ENCODE measurements at regions of chr12 and their contacts with region 1.

Region 1: DNA sequence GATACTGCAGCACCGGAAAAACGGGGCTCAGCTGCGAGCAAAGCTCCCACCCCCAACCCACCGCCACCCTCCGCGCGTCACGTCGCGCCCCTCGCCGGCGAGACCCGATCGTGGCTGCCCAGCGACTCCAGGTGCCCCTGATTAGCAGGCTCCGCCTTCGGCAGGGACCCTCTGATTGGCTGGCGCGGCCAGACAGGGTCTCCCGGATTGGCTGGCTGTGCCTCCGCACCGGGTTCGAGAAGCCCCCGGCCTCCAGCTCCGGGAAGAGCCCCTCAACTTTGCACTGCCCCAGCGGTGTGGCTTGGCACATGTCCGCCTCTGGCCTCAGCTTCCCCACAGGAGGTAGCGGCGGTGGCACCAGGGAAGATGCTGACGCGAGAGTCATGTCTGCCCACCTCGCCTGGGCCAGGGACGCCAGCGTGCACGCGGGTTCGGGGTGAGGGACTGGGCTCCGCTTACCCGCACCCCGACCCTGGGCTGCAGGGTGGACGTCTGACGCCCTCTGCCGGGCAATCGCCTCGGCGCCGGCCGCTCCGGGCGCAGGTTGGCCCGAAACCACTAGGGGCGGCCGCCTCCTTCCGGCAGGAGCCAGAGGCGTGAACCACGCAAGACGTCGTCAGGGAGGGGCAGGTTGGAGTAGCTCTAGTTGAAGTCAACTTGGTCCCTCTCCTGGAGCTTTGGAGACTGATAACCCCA is 498 bp upstream of the RHOF start:
- DNase-seq: peak; percentile 88 to 96
- ATAC-seq: peak; percentile 45 to 74
- H3K4me3 ChIP-seq: peak overlapping the region; percentile 96
- H3K27ac ChIP-seq: peak overlapping the region; percentile 100
- H3K4me1 ChIP-seq: peaks cover 75% of the 10 kb centered on the region
- CTCF ChIP-seq: peak; percentile 100
- EP300 ChIP-seq: no peak
- POLR2A ChIP-seq: no peak; the same call in 1 of the 2 replicates
- RAD21 ChIP-seq: peak; percentile 94 to 98

Region 2: GRCh38 chr12:121626087-121626852 is 167.7 kb before region 1 on chr12 and contains the start of gene ORAI1:
- CTCF ChIA-PET with region 1: interaction called, 14 read pairs
- POLR2A ChIA-PET with region 1: no interaction called
- DNase-seq: peak; percentile 80 to 96
- ATAC-seq: peak; percentile 80 to 87
- H3K4me3 ChIP-seq: peak within 1 kb of the TSS; percentile 67
- H3K27ac ChIP-seq: peak within 1 kb of the TSS; percentile 77 to 92
- H3K4me1 ChIP-seq: peaks cover 32% of the 10 kb centered on the region
- CTCF ChIP-seq: peak; percentile 22; the same call in 2 of the 3 replicates
- EP300 ChIP-seq: no peak
- POLR2A ChIP-seq: peak; percentile 85
- RAD21 ChIP-seq: 0 out of 5 replicates have a peak, but pooled peaks of 1 of the 2 experiments have one; percentile 7
- polyA plus RNA-seq, gene ORAI1: 22.1 and 26.6 TPM in 2 replicates

Region 3: DNA sequence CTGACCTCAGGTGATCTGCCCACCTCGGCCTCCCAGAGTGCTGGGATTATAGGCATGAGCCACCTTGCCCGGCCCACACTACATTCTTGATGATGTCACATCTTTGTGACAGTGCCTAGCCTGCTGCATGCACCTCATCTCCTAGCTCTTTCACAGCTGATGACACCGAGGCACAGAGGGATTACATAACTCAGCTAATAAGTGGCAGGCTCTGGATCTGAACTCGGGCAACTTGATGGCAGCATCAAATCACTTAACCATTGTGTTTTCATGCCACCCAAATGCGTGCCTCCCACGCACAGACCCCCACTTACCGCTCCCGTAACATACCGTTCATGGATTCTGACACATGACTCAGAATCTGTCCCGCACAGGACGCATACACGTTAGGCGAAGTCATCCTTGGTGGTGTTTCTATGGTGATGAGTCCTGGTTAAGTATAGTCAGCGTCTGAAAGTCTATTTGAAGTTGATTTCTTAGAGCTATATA is 74.0 kb before region 1 on chr12:
- CTCF ChIA-PET with region 1: interaction called, 31 read pairs
- POLR2A ChIA-PET with region 1: no interaction called
- DNase-seq: peak in 1 of 2 experiments; percentile 66
- ATAC-seq: peak; percentile 73 to 76
- H3K4me3 ChIP-seq: no peak overlapping the region
- H3K27ac ChIP-seq: peak overlapping the region in 1 of 2 experiments; percentile 36; a peak in 2 of 6 replicates
- H3K4me1 ChIP-seq: peaks cover 21% of the 10 kb centered on the region
- CTCF ChIP-seq: no peak
- EP300 ChIP-seq: no peak
- POLR2A ChIP-seq: no peak
- RAD21 ChIP-seq: no peak

Region 4: DNA sequence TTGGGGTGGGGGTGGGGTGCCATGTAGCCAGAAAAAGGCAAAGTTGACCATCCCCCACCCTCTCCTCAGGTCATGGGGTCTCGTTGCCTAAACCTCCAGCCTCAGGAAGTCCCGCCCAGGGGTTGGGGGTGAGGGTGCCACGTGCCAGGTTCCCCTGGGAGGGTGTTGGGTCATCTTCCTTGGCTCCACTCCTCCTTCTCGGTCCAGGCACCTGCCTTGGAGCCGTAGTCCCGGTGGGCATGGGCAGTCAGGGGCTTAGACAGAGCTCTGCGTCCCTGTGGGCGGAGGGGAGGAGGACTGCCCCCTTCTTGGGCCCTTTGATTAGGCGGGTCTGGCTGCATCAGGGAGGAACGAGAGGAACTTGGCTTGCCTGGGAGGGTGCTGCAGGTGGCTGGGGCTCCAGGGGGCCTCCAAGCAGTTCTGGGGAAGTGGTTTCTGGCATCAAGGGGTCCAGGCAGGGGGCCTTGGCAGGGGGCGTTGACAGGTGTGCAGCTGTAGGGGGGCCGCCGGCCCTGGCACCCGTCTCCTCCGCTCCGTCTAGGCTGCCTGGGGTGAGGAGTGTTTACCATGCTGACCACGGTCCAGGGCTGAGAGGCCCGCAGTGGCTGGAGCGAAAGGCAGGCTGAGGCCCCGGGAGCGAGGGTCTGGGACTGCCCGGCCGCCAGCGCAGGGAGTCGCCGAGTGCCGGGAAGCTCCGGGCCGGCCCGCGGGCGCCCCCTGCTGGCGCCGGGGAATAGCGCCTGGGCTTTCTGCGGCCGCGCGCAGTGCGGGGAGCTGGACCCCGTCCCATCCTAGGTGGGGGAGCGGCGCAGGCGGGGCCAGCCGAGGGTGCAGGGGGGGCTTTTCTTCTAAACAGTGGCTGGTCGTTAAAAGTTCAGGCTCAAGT is 17.7 kb after region 1 on chr12:
- CTCF ChIA-PET with region 1: interaction called, 2,657 read pairs
- POLR2A ChIA-PET with region 1: interaction called, 43 read pairs
- DNase-seq: peak; percentile 70 to 72
- ATAC-seq: peak; percentile 81 to 89
- H3K4me3 ChIP-seq: peak overlapping the region; percentile 53
- H3K27ac ChIP-seq: peak overlapping the region; percentile 74 to 85
- H3K4me1 ChIP-seq: peaks cover 39% of the 10 kb centered on the region
- CTCF ChIP-seq: peak; percentile 97
- EP300 ChIP-seq: no peak
- POLR2A ChIP-seq: no peak
- RAD21 ChIP-seq: peak; percentile 54 to 92; a peak in 4 of 5 replicates

Region 5: GRCh38 chr12:121871467-121871866 is 77.5 kb after region 1 on chr12:
- CTCF ChIA-PET with region 1: interaction called, 10 read pairs
- POLR2A ChIA-PET with region 1: no interaction called
- DNase-seq: no peak
- ATAC-seq: peak; percentile 30 to 41; a peak in 2 of 6 replicates
- H3K4me3 ChIP-seq: no peak overlapping the region
- H3K27ac ChIP-seq: no peak overlapping the region
- H3K4me1 ChIP-seq: no peaks in the 10 kb centered on the region
- CTCF ChIP-seq: no peak
- EP300 ChIP-seq: no peak
- POLR2A ChIP-seq: no peak
- RAD21 ChIP-seq: no peak

Region 6: DNA sequence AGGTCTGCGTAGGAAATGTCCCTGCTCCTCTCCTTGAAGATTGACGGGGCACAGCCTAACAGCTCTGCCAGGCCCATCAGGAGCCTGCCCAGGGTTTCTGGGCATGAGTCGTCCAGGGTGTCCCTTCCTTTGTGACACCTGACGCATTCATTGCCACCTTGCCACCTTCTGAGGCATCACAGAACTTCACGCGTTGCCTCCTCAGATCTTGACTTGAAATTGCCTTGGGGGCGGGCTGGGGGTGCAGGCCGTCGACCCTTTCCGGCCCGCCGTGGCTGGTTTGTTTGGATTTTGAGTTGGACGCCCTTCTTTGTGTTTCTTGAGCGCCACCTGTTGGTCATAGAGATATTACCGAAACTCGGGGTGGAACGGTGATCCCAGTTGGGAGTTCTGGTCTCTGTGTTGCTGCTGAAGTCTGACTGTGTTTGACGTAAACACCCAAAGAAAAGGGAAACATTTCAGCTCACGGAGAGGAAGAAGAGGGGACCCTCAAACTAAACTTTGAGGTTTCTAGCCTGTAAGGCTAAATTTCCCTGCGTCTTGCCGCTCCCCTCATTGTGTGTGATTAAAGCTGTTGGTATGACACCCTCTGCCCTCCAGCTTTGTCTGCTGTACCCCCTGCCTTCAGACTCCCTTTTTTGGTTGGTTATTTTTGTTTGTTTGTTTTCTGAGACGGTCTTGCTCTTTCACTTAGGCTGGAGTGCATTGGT is 329.2 kb after region 1 on chr12:
- CTCF ChIA-PET with region 1: interaction called, 10 read pairs
- POLR2A ChIA-PET with region 1: no interaction called
- DNase-seq: peak; percentile 76
- ATAC-seq: peak; percentile 67 to 72
- H3K4me3 ChIP-seq: no peak overlapping the region
- H3K27ac ChIP-seq: peak overlapping the region; percentile 58 to 83; a peak in 5 of 6 replicates
- H3K4me1 ChIP-seq: peaks cover 37% of the 10 kb centered on the region
- CTCF ChIP-seq: peak; percentile 92
- EP300 ChIP-seq: no peak
- POLR2A ChIP-seq: no peak
- RAD21 ChIP-seq: peak; percentile 95